ENCODE measurements at regions of chr5 and their contacts with region 1.

Region 1: DNA sequence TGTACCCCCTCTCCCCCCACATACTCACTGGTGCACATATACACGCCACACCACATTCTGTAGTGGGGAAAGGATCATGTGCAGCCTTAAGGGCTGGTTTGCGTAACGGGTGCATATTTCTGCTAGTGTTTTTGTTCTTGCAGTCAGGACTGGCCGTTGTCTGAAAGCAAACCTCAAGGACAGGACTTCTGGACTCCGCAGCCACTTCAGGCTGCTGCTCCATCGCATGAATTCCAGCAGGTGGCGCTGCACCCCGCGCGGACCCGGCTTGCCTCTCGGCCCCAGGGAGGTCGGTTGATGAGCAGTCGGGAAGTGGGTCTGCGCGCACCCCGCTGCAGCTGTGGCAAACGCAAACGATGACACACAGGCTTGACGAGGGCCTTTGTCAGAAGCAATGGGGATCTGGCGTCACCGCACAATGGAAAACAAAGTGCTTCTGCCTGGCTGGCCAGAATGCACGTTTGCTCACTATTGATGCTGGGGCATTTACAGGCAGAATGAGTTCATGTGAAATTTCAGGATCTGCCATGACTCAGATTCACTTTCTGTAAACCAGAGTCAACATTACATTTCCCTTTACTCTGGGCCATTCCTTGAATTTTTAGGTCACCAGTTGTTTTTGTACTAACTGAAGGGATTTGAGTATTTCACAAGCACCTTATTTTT is 36.3 kb upstream of the GLRX start:
- DNase-seq: peak; percentile 99
- H3K4me3 ChIP-seq: peak overlapping the region in 2 of 3 experiments; percentile 1 to 18
- H3K27ac ChIP-seq: peak overlapping the region; percentile 98
- H3K4me1 ChIP-seq: peaks cover 58% of the 10 kb centered on the region
- H3K27me3 ChIP-seq: no peaks in the 10 kb centered on the region
- CTCF ChIP-seq: peak; percentile 93 to 99
- POLR2A ChIP-seq: no peak

Region 2: DNA sequence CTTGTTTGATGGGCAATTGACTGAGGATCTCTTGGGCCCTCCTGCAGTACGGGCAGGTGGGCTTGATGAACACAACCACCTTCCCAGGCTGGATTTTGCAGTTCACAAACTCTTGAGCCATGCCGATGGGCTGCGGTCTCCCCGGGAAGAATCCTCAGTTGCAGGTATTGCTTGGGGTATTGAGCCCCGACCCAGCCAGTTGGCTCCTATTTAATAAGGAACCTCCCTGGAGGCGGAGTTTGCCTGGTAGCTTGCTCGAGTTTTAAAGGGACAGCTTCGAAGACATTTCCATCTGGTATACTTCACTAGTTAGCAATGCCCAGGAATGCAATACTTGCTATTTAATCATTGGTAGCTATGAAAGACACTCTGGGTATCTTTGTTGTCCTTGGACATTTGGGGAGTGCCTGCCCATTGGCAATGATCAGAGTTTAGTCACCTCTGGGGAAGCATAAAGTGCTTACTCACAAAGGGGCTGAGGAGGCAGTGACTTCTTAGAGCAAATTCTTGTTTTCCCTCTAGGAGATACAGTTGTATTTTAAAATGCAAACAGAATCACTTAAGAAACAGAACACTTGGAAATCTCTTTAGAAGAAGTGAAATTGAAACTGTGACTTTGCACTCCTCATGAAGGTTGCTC is 36.1 kb before region 1 on chr5 and contains the start of gene GLRX:
- CTCF ChIA-PET with region 1: no interaction called
- POLR2A ChIA-PET with region 1: no interaction called
- dilution Hi-C with region 1: no loop called
- intact Hi-C with region 1: loop called (anchors 2 kb)
- DNase-seq: peak; percentile 82
- H3K4me3 ChIP-seq: peak within 1 kb of the TSS; percentile 63 to 80 (median 69)
- H3K27ac ChIP-seq: peak within 1 kb of the TSS; percentile 54
- H3K4me1 ChIP-seq: peaks cover 26% of the 10 kb centered on the region
- H3K27me3 ChIP-seq: no peaks in the 10 kb centered on the region
- CTCF ChIP-seq: no peak
- POLR2A ChIP-seq: peak; percentile 42
- total RNA-seq, gene GLRX: 13.3 and 14.2 TPM in 2 replicates

Region 3: DNA sequence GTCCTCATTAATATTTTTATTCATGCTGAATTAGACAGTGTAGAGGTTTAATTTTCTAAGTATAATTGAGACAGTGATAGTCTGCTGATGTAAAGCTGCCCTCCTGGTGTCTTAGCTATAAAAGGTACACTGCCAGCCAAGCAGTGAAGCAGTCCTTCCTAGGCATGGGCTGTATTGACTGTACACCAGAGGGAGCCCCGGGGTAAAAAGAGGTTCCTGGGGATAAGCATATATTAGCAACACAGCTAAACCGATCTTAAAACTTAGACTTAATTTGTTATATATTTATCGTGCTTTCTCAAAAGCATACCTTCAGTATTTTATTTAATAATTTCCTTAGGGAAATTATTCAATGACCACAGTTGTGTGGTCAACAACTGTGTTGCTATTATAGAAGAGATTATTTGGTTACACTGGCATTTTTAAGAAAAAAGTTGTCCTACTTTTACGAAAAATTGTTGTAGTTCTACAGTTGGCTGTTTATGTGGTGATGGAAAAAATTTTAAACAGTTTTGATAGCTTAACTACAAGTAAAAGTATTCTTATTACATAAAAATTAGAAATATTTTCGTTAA is 34.1 kb after region 1 on chr5:
- CTCF ChIA-PET with region 1: interaction called, 5 read pairs
- POLR2A ChIA-PET with region 1: no interaction called
- dilution Hi-C with region 1: no loop called
- intact Hi-C with region 1: loop called (anchors 2 kb)
- DNase-seq: peak; percentile 51
- H3K4me3 ChIP-seq: no peak overlapping the region
- H3K27ac ChIP-seq: no peak overlapping the region
- H3K4me1 ChIP-seq: no peaks in the 10 kb centered on the region
- H3K27me3 ChIP-seq: no peaks in the 10 kb centered on the region
- CTCF ChIP-seq: peak; percentile 31 to 44
- POLR2A ChIP-seq: no peak

Region 4: DNA sequence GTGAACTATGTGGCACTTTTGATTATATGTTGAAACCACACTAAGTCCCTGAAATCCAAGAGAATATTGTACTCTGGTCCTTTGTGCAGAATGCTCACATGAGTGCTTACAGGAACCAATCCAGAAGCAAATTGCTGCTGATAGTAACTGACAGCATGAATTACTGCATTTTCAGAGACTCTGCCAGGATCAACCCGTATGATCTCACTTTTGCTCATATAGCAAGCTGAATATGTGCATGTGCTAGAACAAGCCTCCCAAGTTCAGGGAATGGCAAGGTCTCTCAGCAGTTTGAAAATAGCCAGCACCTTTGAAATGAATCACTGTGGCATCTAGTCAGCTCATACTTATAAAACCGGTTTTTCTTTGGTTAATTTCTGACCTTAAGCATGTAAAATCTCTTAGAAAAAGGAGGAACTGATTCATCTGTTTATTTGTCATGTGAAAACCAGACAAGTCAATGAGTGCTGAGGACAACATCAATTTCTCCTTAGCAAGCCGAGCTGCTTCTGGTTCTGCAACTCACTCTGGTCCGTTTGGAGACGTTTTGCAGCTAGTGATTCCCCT is 318.6 kb after region 1 on chr5:
- CTCF ChIA-PET with region 1: no interaction called
- POLR2A ChIA-PET with region 1: no interaction called
- dilution Hi-C with region 1: no loop called
- intact Hi-C with region 1: loop called (anchors 10 kb)
- DNase-seq: no peak
- H3K4me3 ChIP-seq: no peak overlapping the region
- H3K27ac ChIP-seq: no peak overlapping the region
- H3K4me1 ChIP-seq: peaks cover 7% of the 10 kb centered on the region
- H3K27me3 ChIP-seq: no peaks in the 10 kb centered on the region
- CTCF ChIP-seq: no peak
- POLR2A ChIP-seq: no peak

Region 5: DNA sequence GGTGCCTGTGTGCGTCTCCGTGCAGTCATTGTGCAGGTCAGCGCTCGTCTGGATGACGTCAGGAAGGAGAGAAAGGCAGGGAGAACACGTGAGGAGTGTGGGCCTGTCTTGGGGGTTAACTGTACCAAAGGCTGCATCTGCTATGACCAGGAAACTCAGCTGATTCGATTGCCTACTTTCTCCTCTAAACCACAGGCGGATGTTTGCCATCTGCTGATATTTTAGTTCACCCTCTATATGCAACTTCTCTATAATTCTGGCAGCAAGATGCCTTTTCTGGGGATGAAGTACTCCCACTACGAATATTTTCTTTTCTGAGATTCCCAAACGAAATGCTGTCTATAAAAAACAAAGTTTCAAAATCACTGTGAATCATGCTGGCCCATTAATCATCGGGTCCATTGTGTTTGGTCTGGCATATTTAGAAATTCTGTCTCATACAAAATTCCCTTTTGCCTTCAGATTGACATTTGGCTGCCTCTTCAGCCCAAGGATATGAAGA is 549.5 kb after region 1 on chr5:
- CTCF ChIA-PET with region 1: no interaction called
- POLR2A ChIA-PET with region 1: no interaction called
- dilution Hi-C with region 1: no loop called
- intact Hi-C with region 1: loop called (anchors 1 kb)
- DNase-seq: peak; percentile 89
- H3K4me3 ChIP-seq: no peak overlapping the region
- H3K27ac ChIP-seq: peak overlapping the region; percentile 84
- H3K4me1 ChIP-seq: peaks cover 33% of the 10 kb centered on the region
- H3K27me3 ChIP-seq: no peaks in the 10 kb centered on the region
- CTCF ChIP-seq: no peak
- POLR2A ChIP-seq: no peak

Region 6: DNA sequence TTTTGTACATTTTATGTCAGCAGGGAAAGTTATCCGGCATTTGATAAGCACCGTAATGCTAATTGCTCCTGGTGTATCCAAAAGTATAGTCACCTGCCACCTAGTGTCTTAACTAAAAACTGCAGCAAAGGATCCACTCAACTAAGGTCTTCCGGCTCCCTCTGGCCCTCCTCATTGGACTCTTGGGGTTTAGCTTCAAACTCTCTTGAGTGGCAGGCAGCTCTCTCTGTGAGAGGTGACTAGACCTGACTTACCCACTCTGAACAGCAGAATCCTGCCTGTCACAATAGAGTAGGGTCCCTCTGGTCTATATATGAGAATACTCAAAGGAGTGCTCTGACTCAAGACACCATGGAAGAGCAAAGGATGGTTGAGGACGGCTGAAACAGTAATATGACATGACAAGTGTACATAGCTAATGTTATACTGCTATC is 743.0 kb after region 1 on chr5:
- CTCF ChIA-PET with region 1: no interaction called
- POLR2A ChIA-PET with region 1: no interaction called
- dilution Hi-C with region 1: no loop called
- intact Hi-C with region 1: loop called (anchors 1 kb)
- DNase-seq: peak; percentile 87
- H3K4me3 ChIP-seq: peak overlapping the region in 1 of 3 experiments; percentile 21
- H3K27ac ChIP-seq: peak overlapping the region; percentile 90
- H3K4me1 ChIP-seq: peaks cover 43% of the 10 kb centered on the region
- H3K27me3 ChIP-seq: no peaks in the 10 kb centered on the region
- CTCF ChIP-seq: peak; percentile 71
- POLR2A ChIP-seq: no peak

Measured in endothelial cell of umbilical vein (primary cell).